ENCODE measurements at regions of chr5 and their contacts with region 1.

Region 1: GRCh38 chr5:179166886-179167841 is 107.0 kb downstream of the ZNF354C start:
- DNase-seq: peak; percentile 59
- H3K4me3 Mint-ChIP-seq: no peak overlapping the region
- H3K27ac Mint-ChIP-seq: no peak overlapping the region
- H3K4me1 Mint-ChIP-seq: peaks cover 3% of the 10 kb centered on the region
- H3K27me3 Mint-ChIP-seq: peaks cover 9% of the 10 kb centered on the region

Region 2: DNA sequence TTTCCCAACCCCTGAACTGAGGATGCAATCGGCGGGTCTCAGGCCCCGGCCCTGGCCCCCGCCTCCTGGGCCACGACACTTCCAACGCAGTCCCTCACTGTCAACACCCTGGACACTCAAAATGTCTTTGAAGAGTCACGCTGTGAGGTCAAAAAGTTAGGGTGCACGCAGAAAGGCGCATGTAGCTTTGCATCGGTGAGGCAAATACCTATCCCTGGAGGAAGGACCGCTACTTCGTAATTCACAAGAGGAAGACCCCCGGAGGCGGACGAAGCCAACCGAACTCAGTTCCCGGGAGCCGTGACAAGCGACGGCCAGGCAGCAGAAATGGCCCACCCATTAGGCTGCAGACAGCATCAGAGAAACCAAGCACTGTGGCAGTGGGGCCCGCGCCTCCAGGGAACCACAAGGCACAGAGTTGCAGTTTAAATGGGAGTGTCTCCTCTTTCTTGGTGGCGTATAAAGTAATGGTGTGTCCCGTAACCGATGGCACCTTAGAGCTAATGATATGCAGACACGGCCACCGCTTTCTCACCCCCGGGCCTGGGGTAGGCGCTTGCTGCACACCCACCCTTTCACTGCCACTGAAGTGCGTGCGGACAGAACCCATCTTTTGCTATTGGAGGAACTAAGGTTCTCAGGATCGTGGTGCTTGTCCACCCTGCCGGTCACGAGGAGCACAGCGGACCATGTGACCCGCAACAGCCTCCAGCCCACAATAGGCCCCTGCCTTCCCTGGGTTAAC is 169.1 kb after region 1 on chr5:
- CTCF ChIA-PET with region 1: no interaction called
- DNase-seq: no peak
- H3K4me3 Mint-ChIP-seq: no peak overlapping the region
- H3K27ac Mint-ChIP-seq: no peak overlapping the region
- H3K4me1 Mint-ChIP-seq: no peaks in the 10 kb centered on the region
- H3K27me3 Mint-ChIP-seq: peaks cover 21% of the 10 kb centered on the region

Region 3: GRCh38 chr5:179495906-179496455 is 328.8 kb after region 1 on chr5:
- CTCF ChIA-PET with region 1: interaction called, 11 read pairs
- DNase-seq: no peak
- H3K4me3 Mint-ChIP-seq: no peak overlapping the region
- H3K27ac Mint-ChIP-seq: no peak overlapping the region
- H3K4me1 Mint-ChIP-seq: no peaks in the 10 kb centered on the region
- H3K27me3 Mint-ChIP-seq: peaks cover 5% of the 10 kb centered on the region